ENCODE measurements at regions of chr10 and their contacts with region 1.

Region 1: GRCh38 chr10:24642622-24643417 is 80.9 kb downstream of the ARHGAP21 start:
- DNase-seq: peak; percentile 78
- H3K4me3 ChIP-seq: no peak overlapping the region
- H3K27ac ChIP-seq: no peak overlapping the region
- H3K4me1 ChIP-seq: peaks cover 27% of the 10 kb centered on the region
- H3K27me3 ChIP-seq: no peaks in the 10 kb centered on the region
- CTCF ChIP-seq: peak; percentile 52 to 63
- POLR2A ChIP-seq: no peak

Region 2: GRCh38 chr10:24674892-24675632 is 32.2 kb after region 1 on chr10:
- CTCF ChIA-PET with region 1: no interaction called
- POLR2A ChIA-PET with region 1: no interaction called
- dilution Hi-C with region 1: no loop called
- intact Hi-C with region 1: no loop called
- DNase-seq: no peak
- H3K4me3 ChIP-seq: no peak overlapping the region
- H3K27ac ChIP-seq: no peak overlapping the region
- H3K4me1 ChIP-seq: no peaks in the 10 kb centered on the region
- H3K27me3 ChIP-seq: no peaks in the 10 kb centered on the region
- CTCF ChIP-seq: no peak
- POLR2A ChIP-seq: no peak

Region 3: DNA sequence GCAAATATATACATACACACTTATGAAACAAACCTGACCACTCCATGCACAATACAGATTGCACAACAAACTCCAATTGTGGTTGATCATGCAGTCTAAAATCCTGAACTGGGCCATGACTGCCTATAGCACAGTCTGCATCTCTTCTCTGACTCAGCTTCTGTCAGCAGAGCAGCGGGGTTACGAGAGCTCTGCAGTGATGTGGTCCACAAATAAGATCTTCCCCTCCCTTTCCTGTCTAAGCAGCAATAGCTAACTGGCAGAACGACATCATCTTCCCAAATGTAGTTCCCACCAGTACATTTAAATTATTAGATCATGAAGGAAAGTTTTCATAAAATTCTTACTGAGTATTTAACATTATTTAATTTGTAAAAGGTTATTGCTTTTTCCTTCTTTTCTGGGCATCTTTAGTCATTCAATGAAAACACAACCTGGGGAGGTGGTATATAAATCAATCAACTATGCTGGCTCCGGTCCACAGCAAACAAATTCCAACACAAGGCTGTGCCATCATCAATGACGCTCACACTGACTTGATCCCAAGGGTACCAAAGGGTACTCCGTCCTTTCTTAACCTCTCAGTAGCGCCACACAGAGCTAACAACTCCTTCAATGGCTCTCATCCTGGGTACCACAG is 63.8 kb after region 1 on chr10:
- CTCF ChIA-PET with region 1: interaction called, 14 read pairs
- POLR2A ChIA-PET with region 1: no interaction called
- dilution Hi-C with region 1: no loop called
- intact Hi-C with region 1: no loop called
- DNase-seq: peak; percentile 76
- H3K4me3 ChIP-seq: no peak overlapping the region
- H3K27ac ChIP-seq: peak overlapping the region; percentile 32
- H3K4me1 ChIP-seq: peaks cover 18% of the 10 kb centered on the region
- H3K27me3 ChIP-seq: no peaks in the 10 kb centered on the region
- CTCF ChIP-seq: no peak
- POLR2A ChIP-seq: no peak

Region 4: DNA sequence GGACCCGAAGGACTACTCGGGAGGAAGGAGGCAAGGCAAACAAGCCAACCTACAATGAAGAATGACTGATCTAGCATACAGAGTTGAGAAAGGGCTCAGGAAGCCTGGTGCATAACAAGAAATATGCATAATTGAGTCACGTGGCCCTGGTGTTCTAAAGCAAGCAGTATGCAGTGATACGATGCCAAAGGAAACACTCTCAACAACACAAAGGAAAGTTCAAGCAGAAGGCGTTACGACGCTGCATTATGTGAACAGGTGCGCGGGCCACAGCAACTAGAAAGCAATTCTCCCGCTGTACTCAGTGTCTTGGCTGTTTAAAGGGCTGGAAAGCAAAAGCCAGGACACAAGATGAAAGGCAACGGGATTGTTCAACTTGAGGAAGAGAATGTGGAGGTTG is 208.8 kb after region 1 on chr10:
- CTCF ChIA-PET with region 1: interaction called, 10 read pairs
- POLR2A ChIA-PET with region 1: no interaction called
- dilution Hi-C with region 1: no loop called
- intact Hi-C with region 1: loop called (anchors 5 kb)
- DNase-seq: peak; percentile 96
- H3K4me3 ChIP-seq: no peak overlapping the region
- H3K27ac ChIP-seq: peak overlapping the region; percentile 37
- H3K4me1 ChIP-seq: peaks cover 30% of the 10 kb centered on the region
- H3K27me3 ChIP-seq: no peaks in the 10 kb centered on the region
- CTCF ChIP-seq: no peak
- POLR2A ChIP-seq: no peak

Region 5: GRCh38 chr10:24952707-24953645 is 310.2 kb after region 1 on chr10:
- CTCF ChIA-PET with region 1: interaction called, 12 read pairs
- POLR2A ChIA-PET with region 1: no interaction called
- dilution Hi-C with region 1: no loop called
- intact Hi-C with region 1: loop called (anchors 1 kb)
- DNase-seq: peak; percentile 31
- H3K4me3 ChIP-seq: peak overlapping the region; percentile 38 to 47 (median 44)
- H3K27ac ChIP-seq: peak overlapping the region; percentile 64
- H3K4me1 ChIP-seq: peaks cover 9% of the 10 kb centered on the region
- H3K27me3 ChIP-seq: no peaks in the 10 kb centered on the region
- CTCF ChIP-seq: peak in 1 of 2 donors; percentile 21
- POLR2A ChIP-seq: peak; percentile 18

Region 6: DNA sequence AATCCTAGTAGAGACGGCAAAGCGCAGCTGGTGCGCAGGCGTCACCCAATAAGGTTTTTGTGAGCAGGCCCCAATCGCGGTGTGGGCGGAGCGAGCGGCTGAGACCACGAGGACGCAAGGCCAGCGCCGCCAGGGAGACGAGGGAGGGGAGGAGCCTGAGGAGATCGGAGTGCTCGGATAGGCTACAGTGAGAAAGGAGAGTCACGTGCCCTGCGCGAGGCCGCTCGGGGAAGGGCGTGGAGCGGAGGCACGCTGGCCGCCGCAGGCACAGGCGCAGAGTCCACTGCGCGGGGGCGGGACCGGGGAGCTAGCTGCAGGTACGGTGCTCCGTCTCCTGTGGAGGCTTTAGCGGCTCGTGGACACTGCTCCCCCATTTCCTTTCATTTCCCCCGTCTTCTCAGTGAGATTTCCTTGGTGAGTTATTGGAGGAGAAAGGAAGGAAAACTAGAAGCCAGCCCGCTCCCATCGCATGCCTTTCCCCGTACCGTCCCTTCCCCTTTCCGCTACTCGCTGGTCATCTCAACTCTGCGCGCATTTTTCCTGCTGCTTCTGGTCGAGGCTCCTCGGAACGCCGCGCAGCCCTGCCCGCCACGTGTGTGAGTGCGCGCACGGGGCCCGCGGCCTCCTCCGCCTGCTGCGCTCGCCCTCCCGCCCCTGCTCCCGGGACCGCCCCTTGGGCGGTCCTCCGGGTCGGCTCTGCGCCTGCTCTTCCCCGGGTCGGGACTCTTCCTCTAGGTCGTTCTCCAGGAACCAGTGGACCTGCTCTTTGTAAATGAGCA is 373.7 kb after region 1 on chr10 and contains the start of gene THNSL1:
- CTCF ChIA-PET with region 1: interaction called, 4 read pairs
- POLR2A ChIA-PET with region 1: no interaction called
- dilution Hi-C with region 1: no loop called
- intact Hi-C with region 1: loop called (anchors 1 kb)
- DNase-seq: peak; percentile 99
- H3K4me3 ChIP-seq: peak within 1 kb of the TSS; percentile 50 to 85 (median 62)
- H3K27ac ChIP-seq: peak within 1 kb of the TSS; percentile 88
- H3K4me1 ChIP-seq: peaks cover 17% of the 10 kb centered on the region
- H3K27me3 ChIP-seq: no peaks in the 10 kb centered on the region
- CTCF ChIP-seq: no peak
- POLR2A ChIP-seq: peak; percentile 83
- total RNA-seq, gene THNSL1: 1.9 and 2.1 TPM in 2 replicates

Region 7: GRCh38 chr10:25226775-25227682 is 584.2 kb after region 1 on chr10:
- CTCF ChIA-PET with region 1: interaction called, 4 read pairs
- POLR2A ChIA-PET with region 1: no interaction called
- dilution Hi-C with region 1: no loop called
- intact Hi-C with region 1: loop called (anchors 10 kb)
- DNase-seq: peak; percentile 42
- H3K4me3 ChIP-seq: no peak overlapping the region
- H3K27ac ChIP-seq: no peak overlapping the region
- H3K4me1 ChIP-seq: no peaks in the 10 kb centered on the region
- H3K27me3 ChIP-seq: no peaks in the 10 kb centered on the region
- CTCF ChIP-seq: peak; percentile 56
- POLR2A ChIP-seq: no peak

Region 8: DNA sequence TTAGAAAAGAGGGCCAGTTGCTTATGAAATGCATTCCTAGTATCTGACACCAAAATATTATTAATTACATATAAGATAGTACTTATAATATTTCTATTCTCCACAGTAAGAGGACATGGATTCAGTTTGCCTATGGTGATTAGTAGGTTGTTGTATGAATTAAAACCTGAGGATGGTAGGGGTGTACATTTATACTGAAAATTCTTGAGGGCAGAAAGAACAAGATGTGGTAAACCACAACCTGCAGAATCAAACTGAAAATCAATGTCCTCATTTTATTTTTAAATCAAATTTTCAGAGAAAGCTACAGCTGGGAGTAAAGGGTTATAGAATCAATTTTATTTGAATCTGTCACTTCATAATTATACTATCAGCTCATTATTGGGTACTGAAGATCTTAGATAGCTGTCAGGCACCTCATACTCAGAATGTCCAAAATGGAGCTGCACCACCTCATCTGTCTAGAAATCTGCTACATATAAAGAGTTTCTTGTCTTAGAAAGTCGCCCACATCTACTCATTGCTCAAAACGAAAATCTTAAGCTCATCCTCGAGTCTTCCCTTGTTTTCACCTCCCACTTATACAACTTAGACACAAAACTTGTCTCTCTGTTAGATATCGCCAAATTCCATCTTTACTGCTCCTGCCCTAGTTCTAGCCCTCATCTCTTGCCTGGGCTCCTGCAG is 1356.6 kb after region 1 on chr10:
- CTCF ChIA-PET with region 1: no interaction called
- POLR2A ChIA-PET with region 1: no interaction called
- dilution Hi-C with region 1: no loop called
- intact Hi-C with region 1: no loop called
- DNase-seq: no peak
- H3K4me3 ChIP-seq: no peak overlapping the region
- H3K27ac ChIP-seq: no peak overlapping the region
- H3K4me1 ChIP-seq: no peaks in the 10 kb centered on the region
- H3K27me3 ChIP-seq: no peaks in the 10 kb centered on the region
- CTCF ChIP-seq: no peak
- POLR2A ChIP-seq: no peak